IMR-90 (cell line): ENCODE measurements at regions of chr11 and their contacts with region 1.

Region 1: DNA sequence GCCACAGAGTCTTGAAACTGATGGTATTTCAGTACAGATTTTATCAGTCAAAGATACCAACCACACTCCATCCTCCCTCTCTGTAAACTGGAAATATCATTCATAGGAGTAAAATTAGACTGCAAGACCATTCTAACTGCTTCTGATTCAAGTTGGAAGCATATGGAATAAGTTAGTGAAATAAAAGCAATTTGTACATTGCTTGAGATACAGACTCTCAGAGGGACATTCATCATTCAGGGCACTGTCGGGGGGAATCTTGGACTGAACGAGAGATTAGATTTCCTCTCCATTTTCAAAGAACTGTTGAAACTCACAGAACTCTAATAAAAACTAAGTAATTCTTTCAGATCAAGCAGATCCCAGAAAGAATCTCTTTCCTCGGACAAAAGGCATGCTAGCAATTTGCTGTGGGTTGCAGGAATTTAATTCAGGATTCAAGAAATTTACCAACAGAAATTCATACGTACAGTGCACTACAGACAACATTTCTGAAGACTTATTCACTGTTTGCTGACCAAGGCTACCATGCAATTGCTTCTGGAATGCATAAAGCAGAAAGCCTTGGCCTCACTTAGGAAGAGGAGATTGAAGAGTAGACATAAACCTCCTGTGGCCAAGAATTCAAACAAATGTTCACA is 34.1 kb downstream of the PAMR1 start:
- DNase-seq: peak; percentile 96
- ATAC-seq: peak; percentile 93
- H3K4me3 ChIP-seq: no peak overlapping the region
- H3K27ac ChIP-seq: peak overlapping the region; percentile 81; the same call in 1 of the 2 replicates
- H3K4me1 ChIP-seq: peaks cover 17% of the 10 kb centered on the region
- H3K27me3 ChIP-seq: no peaks in the 10 kb centered on the region
- CTCF ChIP-seq: no peak
- POLR2A ChIP-seq: no peak
- RAD21 ChIP-seq: no peak; the same call in 1 of the 2 replicates

Region 2: DNA sequence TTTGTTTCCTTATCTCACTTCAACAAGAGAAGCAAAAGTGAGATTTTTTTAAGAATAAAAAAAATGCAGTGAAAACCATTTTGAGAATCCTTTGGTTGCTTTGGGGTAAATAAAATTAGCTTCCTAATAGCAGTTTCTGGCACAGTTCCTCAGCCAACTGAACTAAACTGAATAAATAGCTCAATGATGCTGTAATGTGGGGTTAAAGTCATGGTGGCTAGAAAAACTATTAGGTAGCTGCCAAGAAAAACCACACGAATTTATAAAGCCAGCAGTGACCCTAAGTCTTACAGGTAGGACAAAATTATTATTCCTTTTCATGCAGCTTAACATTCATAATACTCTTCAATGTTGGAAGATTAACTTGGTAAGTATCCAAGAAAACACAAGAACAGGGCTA is 717.5 kb before region 1 on chr11:
- CTCF ChIA-PET with region 1: no interaction called
- POLR2A ChIA-PET with region 1: no interaction called
- dilution Hi-C with region 1: no loop called
- in situ Hi-C with region 1: no loop called
- intact Hi-C with region 1: no loop called
- DNase-seq: peak; percentile 23
- ATAC-seq: no peak
- H3K4me3 ChIP-seq: no peak overlapping the region
- H3K27ac ChIP-seq: no peak overlapping the region
- H3K4me1 ChIP-seq: no peaks in the 10 kb centered on the region
- H3K27me3 ChIP-seq: peaks cover 16% of the 10 kb centered on the region
- CTCF ChIP-seq: no peak
- POLR2A ChIP-seq: no peak
- RAD21 ChIP-seq: no peak

Region 3: DNA sequence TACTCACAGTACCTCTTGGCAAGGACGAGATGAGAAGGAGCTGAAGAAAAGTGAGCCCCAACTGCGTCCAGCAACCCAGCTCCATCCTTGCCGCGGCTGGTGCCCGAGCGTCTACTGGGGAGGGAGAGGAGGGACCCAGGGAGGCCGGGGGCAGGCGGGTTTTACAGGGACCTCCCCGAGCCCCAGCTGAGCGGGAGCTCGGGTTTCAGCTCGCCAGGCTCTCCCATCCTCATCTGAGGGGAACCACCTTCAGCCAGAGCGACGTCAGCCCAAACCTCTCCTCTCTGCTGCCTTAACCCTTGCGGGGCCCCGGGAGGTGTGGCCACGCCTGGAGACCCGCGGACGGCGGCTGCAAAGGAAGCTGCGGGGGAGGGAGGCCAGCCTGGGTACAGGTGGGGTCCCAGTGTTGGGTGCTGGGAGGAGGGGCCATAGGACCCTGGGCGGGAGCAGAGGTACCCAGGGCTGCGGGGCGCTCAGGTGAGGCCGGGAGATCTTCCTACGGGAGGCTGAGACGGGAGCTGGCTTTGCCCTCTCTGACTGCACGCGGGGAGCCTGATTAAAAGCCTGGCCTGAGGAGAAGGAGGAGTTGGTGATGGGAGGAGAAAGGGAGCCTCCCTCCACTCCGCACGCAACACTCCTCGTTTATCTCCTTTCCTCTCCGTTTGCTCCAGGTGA is 34.3 kb after region 1 on chr11 and contains the start of gene PAMR1:
- CTCF ChIA-PET with region 1: interaction called, 3 read pairs
- POLR2A ChIA-PET with region 1: no interaction called
- dilution Hi-C with region 1: no loop called
- in situ Hi-C with region 1: no loop called
- intact Hi-C with region 1: loop called (anchors 2 kb)
- DNase-seq: peak; percentile 90
- ATAC-seq: peak; percentile 79
- H3K4me3 ChIP-seq: peak within 1 kb of the TSS; percentile 94
- H3K27ac ChIP-seq: peak within 1 kb of the TSS; percentile 91
- H3K4me1 ChIP-seq: peaks cover 29% of the 10 kb centered on the region
- H3K27me3 ChIP-seq: no peaks in the 10 kb centered on the region
- CTCF ChIP-seq: no peak
- POLR2A ChIP-seq: peak; percentile 74
- RAD21 ChIP-seq: no peak
- total RNA-seq, gene PAMR1: 65.5 and 80.7 TPM in 2 replicates

Region 4: DNA sequence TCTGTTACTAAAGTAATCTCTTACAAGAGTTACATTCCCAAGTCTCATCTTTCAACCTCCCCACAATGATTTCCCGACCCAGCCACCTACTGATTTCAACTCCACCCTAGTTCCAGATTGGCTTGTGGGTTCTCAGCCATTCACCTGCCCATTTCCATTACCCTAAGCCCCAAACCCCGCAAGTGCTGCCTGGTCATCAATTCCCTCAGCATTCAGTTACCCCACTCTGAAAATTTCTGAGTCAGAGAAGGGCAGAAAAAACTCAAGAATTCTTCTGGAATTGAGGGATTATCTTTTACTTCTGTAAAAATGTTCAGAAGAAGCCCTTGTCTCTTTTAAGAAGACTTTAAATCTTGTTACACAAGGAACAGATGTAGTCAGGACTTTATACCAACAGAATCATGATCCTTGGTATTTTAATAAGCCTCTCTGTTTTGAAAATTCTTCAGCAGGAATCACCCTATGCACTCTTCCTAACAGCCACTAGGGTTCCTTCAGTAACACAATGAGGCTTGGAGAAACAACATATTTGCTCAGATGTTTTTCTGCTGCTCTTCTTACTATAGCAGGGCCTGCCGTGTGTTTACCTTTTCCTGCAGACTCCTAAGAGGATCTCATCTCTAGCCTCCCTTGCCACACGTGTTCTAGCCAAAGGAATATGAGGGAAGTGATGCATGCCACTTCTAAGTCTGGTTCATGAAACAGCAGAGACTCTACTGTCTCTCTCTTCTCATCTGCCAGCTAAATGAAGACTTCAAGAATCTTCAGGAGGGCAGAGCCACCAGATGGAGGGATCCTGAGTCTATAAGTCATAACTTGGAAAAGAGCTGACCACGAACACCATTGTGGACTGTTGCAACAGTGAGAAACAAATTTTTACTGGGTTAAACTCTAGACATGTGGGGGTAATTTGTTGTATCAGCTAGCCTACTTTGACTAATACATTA is 63.4 kb after region 1 on chr11:
- CTCF ChIA-PET with region 1: no interaction called
- POLR2A ChIA-PET with region 1: no interaction called
- dilution Hi-C with region 1: no loop called
- in situ Hi-C with region 1: no loop called
- intact Hi-C with region 1: loop called (anchors 1 kb)
- DNase-seq: peak; percentile 71
- ATAC-seq: peak; percentile 13; the same call in 1 of the 2 replicates
- H3K4me3 ChIP-seq: no peak overlapping the region
- H3K27ac ChIP-seq: peak overlapping the region; percentile 76
- H3K4me1 ChIP-seq: peaks cover 25% of the 10 kb centered on the region
- H3K27me3 ChIP-seq: no peaks in the 10 kb centered on the region
- CTCF ChIP-seq: peak; percentile 49
- POLR2A ChIP-seq: no peak
- RAD21 ChIP-seq: no peak; the same call in 1 of the 2 replicates

Region 5: GRCh38 chr11:35598254-35599125 is 107.1 kb after region 1 on chr11:
- CTCF ChIA-PET with region 1: no interaction called
- POLR2A ChIA-PET with region 1: no interaction called
- dilution Hi-C with region 1: no loop called
- in situ Hi-C with region 1: no loop called
- intact Hi-C with region 1: loop called (anchors 5 kb)
- DNase-seq: peak; percentile 88
- ATAC-seq: peak; percentile 69
- H3K4me3 ChIP-seq: no peak overlapping the region
- H3K27ac ChIP-seq: no peak overlapping the region
- H3K4me1 ChIP-seq: peaks cover 4% of the 10 kb centered on the region; the same call in 1 of the 2 replicates
- H3K27me3 ChIP-seq: no peaks in the 10 kb centered on the region
- CTCF ChIP-seq: no peak
- POLR2A ChIP-seq: no peak
- RAD21 ChIP-seq: no peak; the same call in 1 of the 2 replicates